Psoas muscle (tissue), 8 donors: ENCODE measurements at regions of chr14 and their contacts with region 1.

Region 1: GRCh38 chr14:56659964-56660551 is 80.5 kb downstream of the TMEM260 start:
- DNase-seq: no peak
- ATAC-seq: peak in 2 of 4 donors; percentile 43 to 61
- H3K4me3 ChIP-seq: no peak overlapping the region
- H3K27ac ChIP-seq: no peak overlapping the region
- H3K4me1 ChIP-seq: no peaks in the 10 kb centered on the region
- H3K27me3 ChIP-seq: no peaks in the 10 kb centered on the region
- CTCF ChIP-seq: peak; percentile 50

Region 2: DNA sequence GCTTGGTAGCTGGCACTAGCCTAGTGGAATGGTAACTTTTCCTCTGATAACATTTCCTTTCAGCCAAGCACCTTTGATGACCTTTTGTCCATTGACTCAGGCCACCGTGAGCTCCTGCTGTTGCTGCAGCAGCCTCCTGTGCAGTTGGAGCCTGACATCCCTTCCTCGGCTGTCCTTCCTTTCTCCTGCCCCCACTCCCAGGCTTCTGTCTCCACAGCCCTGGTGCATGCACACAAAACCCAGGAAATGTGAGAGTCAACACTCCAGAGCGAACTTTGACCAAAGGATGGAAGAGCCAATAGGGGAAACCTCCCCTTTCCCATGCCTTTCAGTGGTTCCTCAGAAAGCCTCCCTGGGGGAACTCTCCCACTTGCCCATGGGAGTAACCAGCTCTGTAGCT is 34.6 kb after region 1 on chr14:
- intact Hi-C with region 1: no loop called
- DNase-seq: no peak
- ATAC-seq: no peak
- H3K4me3 ChIP-seq: no peak overlapping the region
- H3K27ac ChIP-seq: no peak overlapping the region
- H3K4me1 ChIP-seq: no peaks in the 10 kb centered on the region
- H3K27me3 ChIP-seq: no peaks in the 10 kb centered on the region
- CTCF ChIP-seq: no peak

Region 3: GRCh38 chr14:57317316-57317715 is 657.3 kb after region 1 on chr14:
- intact Hi-C with region 1: loop called (anchors 5 to 10 kb)
- DNase-seq: peak; percentile 27 to 52
- ATAC-seq: peak; percentile 54 to 85 (median 65)
- H3K4me3 ChIP-seq: no peak overlapping the region
- H3K27ac ChIP-seq: no peak overlapping the region
- H3K4me1 ChIP-seq: no peaks in the 10 kb centered on the region
- H3K27me3 ChIP-seq: peaks cover 0 to 3% (median 0%) of the 10 kb centered on the region in 3 donors
- CTCF ChIP-seq: peak; percentile 89